Mucosa of descending colon (tissue), 3 donors: ENCODE measurements at regions of chr10 and their contacts with region 1.

Region 1: DNA sequence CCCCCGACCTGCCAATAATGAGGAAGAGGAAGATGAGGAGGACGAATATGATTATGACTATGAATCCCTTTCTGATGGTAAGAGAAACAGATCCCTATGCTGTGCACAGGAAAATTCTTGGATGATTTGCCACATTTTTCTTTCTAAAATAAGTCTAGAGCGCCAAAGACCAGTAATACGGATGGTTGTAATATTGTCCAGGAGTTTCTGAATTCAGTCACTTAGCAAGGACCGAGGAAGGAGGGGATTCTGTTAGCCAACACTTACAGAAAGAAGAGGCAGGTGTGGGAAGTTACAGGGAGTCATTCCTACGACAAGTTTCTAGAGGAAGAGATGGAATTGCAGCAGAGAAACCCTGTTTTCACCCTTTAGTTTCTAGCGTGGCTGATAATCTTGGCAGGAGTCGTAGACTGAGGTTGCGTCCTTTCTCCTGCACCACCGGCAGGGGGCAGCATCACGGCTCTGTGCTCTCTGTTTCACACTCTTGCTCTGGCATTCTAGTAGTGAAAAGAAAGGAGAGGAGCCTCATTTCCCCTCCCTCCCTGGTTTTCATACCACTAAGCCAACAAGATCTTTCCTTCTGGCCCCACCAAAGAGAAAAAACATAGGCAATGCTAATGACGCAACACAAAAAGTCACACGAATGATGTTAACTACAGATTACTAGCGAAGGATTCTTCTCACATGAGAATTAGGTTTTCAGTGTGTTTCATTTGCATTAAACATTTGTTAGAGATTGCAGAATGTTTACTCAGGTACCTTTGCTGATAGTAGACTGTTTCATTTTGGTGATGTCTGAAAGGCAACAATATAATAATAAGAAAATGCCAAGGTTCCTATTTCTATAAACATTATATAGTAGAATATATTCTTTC is 82.7 kb downstream of the NOC3L start:
- DNase-seq: peak in 2 of 3 donors; percentile 29 to 56
- ATAC-seq: peak; percentile 83
- H3K4me3 ChIP-seq: no peak overlapping the region
- H3K4me1 ChIP-seq: no peaks in the 10 kb centered on the region
- CTCF ChIP-seq: peak; percentile 73

Region 2: DNA sequence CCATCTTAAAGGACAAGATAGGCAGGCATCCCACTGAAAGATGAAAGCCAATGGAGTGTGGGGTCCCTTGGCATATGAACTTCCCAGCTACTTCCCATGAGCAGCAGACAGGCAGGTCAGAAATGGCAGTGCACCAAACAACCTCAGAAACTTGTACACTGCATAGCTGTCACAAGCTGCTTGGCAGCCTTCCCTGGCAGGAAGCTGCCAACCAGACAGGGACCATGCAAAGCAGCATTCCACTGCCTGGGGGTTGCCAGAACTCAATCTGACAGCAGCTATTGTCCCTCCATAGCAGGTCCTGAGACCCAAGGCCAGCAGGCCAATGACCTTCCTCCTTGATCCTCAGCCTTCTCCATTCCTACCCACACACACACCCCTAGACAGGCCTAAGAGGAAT is 146.8 kb before region 1 on chr10:
- intact Hi-C with region 1: no loop called
- DNase-seq: no peak
- ATAC-seq: peak; percentile 17
- H3K4me3 ChIP-seq: no peak overlapping the region
- H3K4me1 ChIP-seq: no peaks in the 10 kb centered on the region
- CTCF ChIP-seq: no peak

Region 3: DNA sequence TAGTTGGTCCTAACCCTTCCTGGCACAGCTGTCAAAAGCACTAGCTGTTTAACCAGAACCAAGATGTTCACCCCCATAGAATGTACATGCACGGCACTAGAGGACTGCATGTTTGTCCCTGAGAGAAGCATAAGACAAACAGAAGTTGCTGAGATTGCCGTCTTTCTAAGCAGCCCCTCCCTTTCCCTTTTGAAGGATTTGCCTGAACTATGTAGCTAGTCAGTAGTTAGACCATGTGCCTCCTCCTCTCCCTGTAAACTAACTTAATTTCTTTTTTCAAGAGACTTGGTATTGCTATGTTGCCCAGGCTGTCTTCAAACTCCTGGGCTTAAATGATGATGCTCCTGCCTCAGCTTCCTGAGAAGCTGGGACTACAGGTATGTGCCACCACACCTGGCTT is 163.0 kb after region 1 on chr10:
- intact Hi-C with region 1: loop called in 1 of 2 experiments (anchors 10 kb)
- DNase-seq: no peak
- ATAC-seq: no peak
- H3K4me3 ChIP-seq: no peak overlapping the region
- H3K4me1 ChIP-seq: no peaks in the 10 kb centered on the region
- CTCF ChIP-seq: no peak